ENCODE measurements at regions of chr2 and their contacts with region 1.

Region 1: GRCh38 chr2:216698895-216699294 is 3.5 kb upstream of the IGFBP5 start:
- DNase-seq: no peak
- ATAC-seq: peak; percentile 43
- H3K4me3 Mint-ChIP-seq: no peak overlapping the region
- H3K27ac Mint-ChIP-seq: no peak overlapping the region
- H3K4me1 Mint-ChIP-seq: peaks cover 21% of the 10 kb centered on the region
- H3K27me3 Mint-ChIP-seq: peaks cover 23% of the 10 kb centered on the region
- CTCF ChIP-seq: peak; percentile 40; the same call in 1 of the 2 replicates

Region 2: GRCh38 chr2:216687646-216688045 is 11.2 kb before region 1 on chr2:
- CTCF ChIA-PET with region 1: interaction called, 23 read pairs
- POLR2A ChIA-PET with region 1: interaction called, 4 read pairs
- DNase-seq: peak; percentile 84
- ATAC-seq: peak; percentile 67
- H3K4me3 Mint-ChIP-seq: no peak overlapping the region
- H3K27ac Mint-ChIP-seq: no peak overlapping the region
- H3K4me1 Mint-ChIP-seq: peaks cover 34% of the 10 kb centered on the region
- H3K27me3 Mint-ChIP-seq: peaks cover 24% of the 10 kb centered on the region
- CTCF ChIP-seq: peak; percentile 67

Region 3: DNA sequence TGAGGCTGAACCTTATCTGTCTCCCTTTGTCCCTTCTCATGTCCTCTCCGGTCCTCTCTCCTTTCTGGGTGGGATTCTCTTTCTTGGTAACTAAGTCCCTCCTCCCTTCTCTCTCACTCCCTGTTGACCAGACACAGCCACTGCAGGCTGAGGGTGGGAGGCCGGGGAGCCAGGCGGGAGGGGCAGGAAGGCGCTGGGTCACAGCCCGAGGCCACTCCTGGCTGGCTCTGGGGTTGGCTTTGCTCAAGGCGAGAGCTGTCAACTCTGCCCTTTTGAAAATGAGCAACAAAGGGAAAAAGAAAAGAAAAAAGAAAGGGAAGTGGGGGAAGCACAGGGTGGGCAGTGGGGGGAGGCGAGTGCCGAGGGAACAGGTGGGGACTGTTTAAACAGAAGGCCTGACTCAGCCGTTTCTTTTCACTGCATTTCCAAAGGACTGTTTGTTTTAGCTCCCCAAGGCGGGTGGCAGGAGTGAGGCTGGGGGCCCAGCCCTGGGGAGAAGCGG is 66.9 kb after region 1 on chr2:
- CTCF ChIA-PET with region 1: interaction called, 18 read pairs
- POLR2A ChIA-PET with region 1: interaction called, 7 read pairs
- DNase-seq: peak; percentile 78
- ATAC-seq: peak; percentile 98
- H3K4me3 Mint-ChIP-seq: peak overlapping the region; percentile 29
- H3K27ac Mint-ChIP-seq: peak overlapping the region; percentile 82
- H3K4me1 Mint-ChIP-seq: peaks cover 56% of the 10 kb centered on the region
- H3K27me3 Mint-ChIP-seq: peaks cover 3% of the 10 kb centered on the region; the same call in 1 of the 2 replicates
- CTCF ChIP-seq: no peak

Region 4: GRCh38 chr2:217099561-217099960 is 400.7 kb after region 1 on chr2:
- CTCF ChIA-PET with region 1: no interaction called
- POLR2A ChIA-PET with region 1: no interaction called
- DNase-seq: no peak
- ATAC-seq: no peak
- H3K4me3 Mint-ChIP-seq: no peak overlapping the region
- H3K27ac Mint-ChIP-seq: no peak overlapping the region
- H3K4me1 Mint-ChIP-seq: peaks cover 15% of the 10 kb centered on the region
- H3K27me3 Mint-ChIP-seq: peaks cover 5% of the 10 kb centered on the region; the same call in 1 of the 2 replicates
- CTCF ChIP-seq: no peak